GM13976 (cell line): ENCODE measurements at regions of chr20 and their contacts with region 1.

Region 1: GRCh38 chr20:32031007-32031958 is 20.8 kb upstream of the HCK start:
- DNase-seq: peak; percentile 68
- CTCF ChIP-seq: peak; percentile 63

Region 2: DNA sequence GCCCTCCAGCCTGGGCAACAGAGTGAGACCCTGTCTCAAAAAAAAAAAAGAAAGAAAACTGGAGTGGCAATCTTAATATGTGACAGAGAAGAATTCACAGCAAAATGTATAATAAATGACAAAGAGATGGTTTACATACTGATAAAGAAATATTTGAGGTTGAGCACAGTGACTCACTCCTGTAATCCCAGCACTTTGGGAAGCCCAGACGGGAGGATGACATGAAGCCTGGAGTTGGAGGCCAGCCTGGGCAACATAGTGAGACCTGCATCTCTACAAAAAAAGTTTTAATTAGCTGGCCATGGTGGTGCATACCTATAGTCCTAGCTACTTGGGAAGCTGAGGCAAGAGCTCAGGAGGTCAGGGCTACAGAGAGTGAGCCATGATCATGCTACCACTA is 675.3 kb before region 1 on chr20:
- in situ Hi-C with region 1: no loop called
- DNase-seq: no peak
- CTCF ChIP-seq: no peak

Region 3: GRCh38 chr20:32091888-32092346 is 60.6 kb after region 1 on chr20:
- in situ Hi-C with region 1: loop called (anchors 5 kb)
- DNase-seq: peak; percentile 81
- CTCF ChIP-seq: peak; percentile 87